Esophagus muscularis mucosa (tissue), 4 donors: ENCODE measurements at regions of chrX and their contacts with region 1.

Region 1: DNA sequence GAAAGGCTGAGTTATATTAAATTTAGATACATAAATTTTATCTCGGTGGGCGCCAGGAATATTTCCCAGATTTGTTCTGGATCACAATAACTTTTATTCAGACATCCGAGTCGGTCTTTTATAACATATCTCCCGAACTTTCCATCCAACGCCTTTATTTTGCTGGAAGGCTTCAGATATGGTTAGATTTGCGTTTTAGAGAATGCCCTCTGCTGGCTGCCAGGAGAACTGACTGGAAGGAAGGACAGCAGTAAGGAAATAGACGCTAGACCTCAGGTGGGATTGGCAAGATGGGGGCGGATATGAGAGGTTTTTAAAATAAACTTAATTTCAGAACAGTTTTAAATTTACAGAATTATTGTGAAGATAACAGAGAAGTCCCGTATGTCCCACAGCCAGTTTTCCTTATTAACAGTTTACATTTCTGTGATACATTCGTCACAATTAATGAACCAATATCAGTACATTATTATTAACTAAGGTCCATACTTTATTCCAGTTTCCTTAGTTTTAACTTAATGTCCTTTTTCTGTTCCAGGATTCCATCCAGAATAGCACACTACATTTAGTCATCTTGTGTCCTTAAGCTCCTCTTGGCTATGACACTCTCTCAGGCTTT is 4.6 kb upstream of the KANTR start:
- DNase-seq: no peak
- H3K4me3 ChIP-seq: peak overlapping the region; percentile 44 to 84 (median 62)
- H3K27ac ChIP-seq: peak overlapping the region; percentile 84 to 97 (median 94)
- H3K4me1 ChIP-seq: peaks cover 7 to 61% (median 33%) of the 10 kb centered on the region in 4 donors
- H3K27me3 ChIP-seq: no peaks in the 10 kb centered on the region
- CTCF ChIP-seq: peak; percentile 76 to 87 (median 80)
- EP300 ChIP-seq: no peak
- POLR2A ChIP-seq: no peak

Region 2: GRCh38 chrX:53031380-53031779 is 58.0 kb before region 1 on chrX:
- intact Hi-C with region 1: no loop called
- DNase-seq: no peak
- H3K4me3 ChIP-seq: no peak overlapping the region
- H3K27ac ChIP-seq: no peak overlapping the region
- H3K4me1 ChIP-seq: no peaks in the 10 kb centered on the region
- H3K27me3 ChIP-seq: no peaks in the 10 kb centered on the region
- CTCF ChIP-seq: no peak
- EP300 ChIP-seq: no peak
- POLR2A ChIP-seq: no peak

Region 3: GRCh38 chrX:53071604-53072417 is 17.5 kb before region 1 on chrX:
- intact Hi-C with region 1: loop called (anchors 1 kb)
- DNase-seq: no peak
- H3K4me3 ChIP-seq: peak overlapping the region; percentile 41 to 57 (median 44)
- H3K27ac ChIP-seq: peak overlapping the region; percentile 77 to 84 (median 84)
- H3K4me1 ChIP-seq: peaks cover 2 to 20% (median 16%) of the 10 kb centered on the region in 4 donors
- H3K27me3 ChIP-seq: no peaks in the 10 kb centered on the region
- CTCF ChIP-seq: peak; percentile 61 to 75 (median 66)
- EP300 ChIP-seq: peak; percentile 100
- POLR2A ChIP-seq: no peak